ENCODE measurements at regions of chr5 and their contacts with region 1.

Region 1: DNA sequence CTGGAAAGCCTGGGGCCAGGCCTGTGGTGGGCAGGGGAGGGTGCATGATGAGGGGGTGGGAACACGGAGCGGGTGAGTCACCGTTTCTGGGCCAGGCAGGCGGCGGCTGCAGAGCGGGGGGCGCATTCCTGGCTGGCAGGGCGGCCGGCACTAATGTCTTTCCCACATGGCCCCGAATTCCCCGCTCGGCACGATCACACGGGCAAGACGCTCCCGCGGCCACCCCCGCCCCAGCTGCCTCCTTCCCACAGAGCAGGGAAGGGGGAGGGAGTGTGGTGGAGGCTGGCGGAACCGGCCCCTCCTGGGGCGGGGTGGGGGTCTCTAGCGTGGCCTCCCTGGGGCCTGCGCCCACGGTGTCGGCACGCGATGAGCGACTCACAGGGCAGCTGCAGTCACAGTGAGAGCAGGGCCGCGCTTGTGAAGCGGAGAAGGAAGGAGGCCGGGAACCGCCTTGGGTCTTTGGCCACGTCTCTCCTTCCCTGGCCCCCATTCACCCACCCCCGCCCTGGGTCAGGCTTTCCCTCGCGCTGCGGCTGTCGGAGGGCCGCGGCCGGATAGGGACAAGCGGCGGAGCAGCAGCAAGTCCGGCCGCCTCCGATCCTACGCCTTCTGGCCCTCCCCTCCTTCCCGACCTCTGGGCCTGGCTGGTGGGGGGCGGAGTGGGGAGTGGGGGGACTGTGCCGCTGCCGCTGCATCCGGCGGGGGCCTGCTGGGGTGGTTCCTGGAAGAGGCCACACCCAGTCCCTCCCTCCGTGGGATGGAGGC is 48.9 kb downstream of the CXXC5 start:
- DNase-seq: peak in 1 of 2 donors; percentile 57
- H3K4me3 ChIP-seq: peak overlapping the region; percentile 41 to 71 (median 53)
- H3K27ac ChIP-seq: peak overlapping the region; percentile 84 to 96
- H3K4me1 ChIP-seq: peaks cover 0 to 9% of the 10 kb centered on the region in 2 donors
- H3K27me3 ChIP-seq: no peaks in the 10 kb centered on the region
- CTCF ChIP-seq: no peak
- POLR2A ChIP-seq: no peak

Region 2: DNA sequence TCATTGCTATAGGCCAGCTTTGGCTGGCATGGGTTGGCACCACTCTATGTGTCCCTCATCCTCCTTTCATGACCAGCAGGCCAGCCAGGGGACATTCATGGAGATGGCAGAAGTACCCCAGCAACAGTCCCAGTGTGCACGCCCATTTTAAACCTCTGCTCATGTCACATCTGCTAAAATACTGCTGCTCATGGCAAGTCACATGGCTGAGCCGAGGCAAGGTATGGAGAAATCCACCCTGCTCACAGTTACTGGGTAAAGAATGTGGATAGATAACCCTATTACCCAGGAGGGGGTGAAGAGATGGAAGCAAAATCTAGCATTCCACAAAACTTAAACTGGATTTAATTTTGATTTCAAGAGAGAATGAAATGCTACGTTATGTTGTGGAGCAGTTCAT is 1027.0 kb before region 1 on chr5:
- intact Hi-C with region 1: loop called (anchors 5 kb)
- DNase-seq: peak in 1 of 2 donors; percentile 24
- H3K4me3 ChIP-seq: no peak overlapping the region
- H3K27ac ChIP-seq: no peak overlapping the region
- H3K4me1 ChIP-seq: no peaks in the 10 kb centered on the region
- H3K27me3 ChIP-seq: no peaks in the 10 kb centered on the region
- CTCF ChIP-seq: no peak
- POLR2A ChIP-seq: no peak

Region 3: GRCh38 chr5:139648205-139649081 is 48.6 kb before region 1 on chr5 and contains the start of gene CXXC5:
- intact Hi-C with region 1: loop called (anchors 10 kb)
- DNase-seq: peak in 1 of 2 donors; percentile 79
- H3K4me3 ChIP-seq: peak within 1 kb of the TSS; percentile 80 to 94 (median 80)
- H3K27ac ChIP-seq: peak within 1 kb of the TSS; percentile 97
- H3K4me1 ChIP-seq: peaks cover 8 to 25% of the 10 kb centered on the region in 2 donors
- H3K27me3 ChIP-seq: no peaks in the 10 kb centered on the region
- CTCF ChIP-seq: no peak
- POLR2A ChIP-seq: peak; percentile 21
- total RNA-seq, gene CXXC5: 33.9 to 66.9 (median 38.3) TPM

Region 4: GRCh38 chr5:139763930-139764791 is 67.1 kb after region 1 on chr5:
- intact Hi-C with region 1: no loop called
- DNase-seq: no peak
- H3K4me3 ChIP-seq: no peak overlapping the region
- H3K27ac ChIP-seq: no peak overlapping the region
- H3K4me1 ChIP-seq: no peaks in the 10 kb centered on the region
- H3K27me3 ChIP-seq: peaks cover 0 to 19% of the 10 kb centered on the region in 2 donors
- CTCF ChIP-seq: no peak
- POLR2A ChIP-seq: no peak